ENCODE measurements at regions of chr5 and their contacts with region 1.

Region 1: GRCh38 chr5:43484106-43484849 is 613 bp upstream of the TMEM267 start:
- DNase-seq: peak; percentile 86

Region 2: DNA sequence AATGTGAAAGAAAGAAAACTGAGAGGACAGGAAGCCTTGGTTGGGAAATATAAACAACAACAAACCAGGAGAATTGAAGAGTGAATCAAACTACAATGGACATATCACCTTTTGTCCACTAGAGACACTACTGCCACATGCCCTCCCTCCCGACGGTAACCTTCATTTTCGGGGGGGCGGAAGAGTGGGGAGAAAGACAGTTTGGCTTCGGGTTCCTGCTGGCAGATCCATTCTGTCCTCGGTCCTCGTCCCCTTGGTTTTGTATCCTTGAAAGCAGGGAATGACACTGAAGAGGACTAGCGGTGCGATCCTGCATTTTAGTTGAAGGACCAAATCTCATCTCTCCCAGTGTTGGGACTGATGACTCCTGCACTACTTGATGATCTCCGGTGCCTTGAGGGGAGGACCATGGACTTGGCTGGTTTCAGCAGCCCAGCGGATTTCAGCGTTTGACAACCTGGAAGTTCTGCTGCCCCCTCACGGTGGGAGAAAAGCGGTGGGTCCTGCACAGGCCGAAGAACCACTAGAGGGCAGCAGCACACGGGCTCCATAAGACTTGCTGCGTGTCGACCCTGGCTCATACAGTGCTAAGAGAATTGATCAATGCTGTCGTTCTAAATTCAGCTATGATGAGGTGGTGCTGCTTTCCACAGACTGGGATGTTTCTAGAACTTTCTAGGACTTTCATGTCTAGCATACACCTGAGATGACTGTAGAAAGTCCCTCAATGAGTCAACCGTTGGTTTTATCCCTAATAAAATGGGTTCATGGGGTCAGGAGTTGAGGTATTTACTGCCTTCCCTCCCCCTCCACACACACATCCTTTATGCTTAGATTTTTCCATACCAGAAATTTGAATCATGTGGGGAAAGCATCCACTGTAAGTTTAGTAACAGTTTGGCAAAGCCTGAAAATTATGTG is 378.6 kb before region 1 on chr5:
- intact Hi-C with region 1: loop called (anchors 5 kb)
- DNase-seq: peak; percentile 94

Region 3: DNA sequence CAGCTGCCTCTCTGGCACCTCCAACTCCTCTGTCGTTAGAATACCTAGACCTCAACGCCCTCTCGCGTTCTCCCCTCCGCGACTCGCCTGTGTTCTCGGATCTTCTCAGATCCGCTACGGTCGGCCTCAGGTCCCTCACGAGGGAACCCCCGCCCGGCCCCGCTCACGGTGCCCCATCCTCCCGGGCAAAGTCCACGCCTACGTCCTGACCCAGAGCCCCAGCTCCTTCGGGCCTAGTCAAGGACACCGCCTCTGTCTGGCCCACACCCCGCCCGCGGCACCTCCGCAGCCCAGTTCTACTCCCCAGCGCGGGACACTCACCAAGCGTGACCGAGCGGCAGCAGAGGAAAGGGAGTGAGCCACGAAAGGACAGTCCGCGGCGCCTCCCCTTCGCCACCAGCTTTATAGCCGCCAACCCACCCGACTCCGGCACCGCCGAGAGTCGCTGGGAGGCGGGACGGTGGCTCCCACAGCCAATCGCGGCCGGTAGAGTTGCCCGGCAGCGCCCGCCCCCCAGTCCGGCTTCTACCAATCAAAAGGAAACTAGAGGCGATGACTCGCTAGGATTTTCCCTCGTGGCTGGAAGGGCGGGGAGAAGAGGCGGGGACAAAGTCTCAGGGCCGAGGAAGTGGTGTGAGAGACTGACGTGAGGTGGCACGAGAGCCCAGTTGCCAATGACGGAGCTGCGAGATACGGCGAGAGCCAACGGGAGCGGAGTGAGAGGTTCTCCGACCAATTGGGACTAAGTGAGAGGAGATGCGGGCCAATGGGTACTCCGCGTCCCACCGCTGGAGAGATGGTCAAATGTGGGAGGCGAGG is 171.0 kb before region 1 on chr5 and contains the start of gene HMGCS1:
- intact Hi-C with region 1: loop called (anchors 5 kb)
- DNase-seq: peak; percentile 98
- total RNA-seq, gene HMGCS1: 34.4 TPM

Region 4: DNA sequence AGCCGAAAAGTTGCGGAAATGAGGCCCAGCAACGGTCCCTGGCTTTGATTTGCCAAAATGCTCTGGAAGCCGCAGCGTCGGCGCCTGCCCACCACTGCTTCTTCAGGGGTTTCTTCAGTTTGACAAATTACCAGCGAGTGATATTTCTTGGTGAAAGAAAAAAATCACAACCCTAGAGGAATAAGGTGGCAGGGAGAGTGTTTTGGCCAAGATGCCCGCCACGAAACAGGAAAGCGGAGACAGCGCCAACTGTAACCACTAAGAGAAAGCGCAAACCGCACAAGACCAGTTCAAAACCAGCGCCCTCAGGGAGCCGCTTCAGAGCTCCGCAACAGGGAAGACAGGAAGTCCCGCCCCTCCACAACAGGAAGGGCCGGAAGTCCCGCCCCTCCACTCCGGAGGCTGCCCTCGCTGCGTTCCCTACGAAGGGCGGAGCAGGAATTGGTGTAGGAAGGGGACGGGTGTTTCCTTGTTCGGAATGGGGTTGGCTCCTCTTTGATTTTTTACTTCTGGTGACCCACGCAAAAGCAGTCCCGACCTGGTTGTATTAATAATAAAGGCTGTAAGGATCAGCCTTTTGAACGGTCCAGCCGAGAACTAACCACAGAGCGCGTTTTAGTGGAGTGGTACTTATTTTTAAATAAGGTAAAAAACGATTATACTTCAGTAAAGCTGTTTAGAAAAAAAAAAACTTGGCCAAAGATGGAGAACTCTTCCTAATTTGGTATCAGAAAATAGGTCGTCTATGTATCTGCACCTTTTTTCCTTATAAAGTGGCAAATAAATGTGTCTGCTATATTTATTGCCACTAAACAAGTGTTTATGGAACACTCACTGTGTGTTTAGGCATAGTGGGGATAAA is 30.8 kb after region 1 on chr5 and contains the start of gene C5orf34:
- intact Hi-C with region 1: loop called (anchors 1 kb)
- DNase-seq: peak; percentile 98
- total RNA-seq, gene C5orf34: 0.22 TPM

Region 5: GRCh38 chr5:43556857-43557542 is 72.7 kb after region 1 on chr5 and contains the start of gene PAIP1:
- intact Hi-C with region 1: loop called (anchors 2 kb)
- DNase-seq: peak; percentile 89
- total RNA-seq, gene PAIP1: 118 TPM

Region 6: GRCh38 chr5:43602461-43603343 is 118.4 kb after region 1 on chr5 and contains the start of gene NNT:
- intact Hi-C with region 1: loop called (anchors 2 kb)
- DNase-seq: peak; percentile 93
- total RNA-seq, gene NNT: 396 TPM

Measured in cardiac septum (tissue), 1 donor.